ENCODE measurements at regions of chr1 and their contacts with region 1.

Region 1: GRCh38 chr1:13730751-13731482 is 30.9 kb downstream of the PRDM2 start:
- DNase-seq: peak; percentile 76
- ATAC-seq: peak; percentile 89
- H3K4me3 Mint-ChIP-seq: peak overlapping the region; percentile 82
- H3K27ac Mint-ChIP-seq: peak overlapping the region; percentile 97
- H3K4me1 Mint-ChIP-seq: peaks cover 99% of the 10 kb centered on the region
- H3K27me3 Mint-ChIP-seq: no peaks in the 10 kb centered on the region
- CTCF ChIP-seq: no peak

Region 2: DNA sequence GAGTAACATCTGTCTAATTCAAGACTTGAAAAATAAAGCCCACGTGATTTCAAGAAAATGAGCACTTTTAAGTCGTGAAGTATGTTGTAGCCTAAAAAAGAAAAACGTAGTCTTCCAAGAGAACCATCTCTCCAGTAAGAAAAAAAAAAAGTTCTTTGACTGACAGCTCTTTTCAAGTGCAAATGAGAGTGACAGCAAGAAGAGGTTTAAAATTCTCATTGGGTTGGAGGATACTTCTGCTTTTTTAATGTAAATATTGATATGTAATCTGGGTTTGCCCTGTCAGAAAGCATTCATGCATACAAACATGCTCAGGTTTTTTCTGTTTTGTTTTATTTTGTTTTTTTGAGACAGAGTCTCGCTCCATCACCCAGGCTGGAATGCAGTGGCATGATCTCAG is 63.2 kb before region 1 on chr1:
- CTCF ChIA-PET with region 1: interaction called, 107 read pairs
- POLR2A ChIA-PET with region 1: interaction called, 57 read pairs
- intact Hi-C with region 1: loop called (anchors 1 kb)
- DNase-seq: no peak
- ATAC-seq: peak; percentile 75
- H3K4me3 Mint-ChIP-seq: peak overlapping the region; percentile 78
- H3K27ac Mint-ChIP-seq: peak overlapping the region; percentile 95
- H3K4me1 Mint-ChIP-seq: peaks cover 48% of the 10 kb centered on the region
- H3K27me3 Mint-ChIP-seq: no peaks in the 10 kb centered on the region
- CTCF ChIP-seq: no peak

Region 3: DNA sequence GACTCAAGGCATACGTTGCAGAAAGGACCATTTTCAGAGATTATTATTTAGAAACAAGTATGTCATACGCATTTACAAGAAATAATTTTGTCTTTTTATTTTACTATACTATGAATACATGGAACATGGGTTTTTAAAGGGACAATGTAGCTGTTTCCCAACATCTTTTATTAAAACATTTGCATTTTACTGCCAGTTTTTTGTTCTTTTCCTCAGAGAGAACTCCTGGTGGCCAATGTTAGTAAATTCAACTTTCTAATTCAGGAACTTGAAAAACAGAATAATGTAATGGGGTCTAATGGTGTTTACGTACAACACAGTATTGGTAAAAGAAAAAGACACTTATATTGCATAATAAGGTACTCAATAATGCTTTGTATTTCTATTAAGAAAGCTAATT is 16.1 kb before region 1 on chr1:
- CTCF ChIA-PET with region 1: interaction called, 34 read pairs
- POLR2A ChIA-PET with region 1: interaction called, 43 read pairs
- intact Hi-C with region 1: no loop called
- DNase-seq: no peak
- ATAC-seq: no peak
- H3K4me3 Mint-ChIP-seq: no peak overlapping the region
- H3K27ac Mint-ChIP-seq: peak overlapping the region; percentile 65
- H3K4me1 Mint-ChIP-seq: peaks cover 78% of the 10 kb centered on the region
- H3K27me3 Mint-ChIP-seq: no peaks in the 10 kb centered on the region
- CTCF ChIP-seq: no peak

Region 4: GRCh38 chr1:13748610-13749505 is 17.9 kb after region 1 on chr1:
- CTCF ChIA-PET with region 1: interaction called, 7 read pairs
- POLR2A ChIA-PET with region 1: interaction called, 51 read pairs
- intact Hi-C with region 1: loop called (anchors 1 kb)
- DNase-seq: peak; percentile 96
- ATAC-seq: peak; percentile 88
- H3K4me3 Mint-ChIP-seq: peak overlapping the region; percentile 85
- H3K27ac Mint-ChIP-seq: peak overlapping the region; percentile 94
- H3K4me1 Mint-ChIP-seq: peaks cover 55% of the 10 kb centered on the region
- H3K27me3 Mint-ChIP-seq: no peaks in the 10 kb centered on the region
- CTCF ChIP-seq: no peak

Region 5: DNA sequence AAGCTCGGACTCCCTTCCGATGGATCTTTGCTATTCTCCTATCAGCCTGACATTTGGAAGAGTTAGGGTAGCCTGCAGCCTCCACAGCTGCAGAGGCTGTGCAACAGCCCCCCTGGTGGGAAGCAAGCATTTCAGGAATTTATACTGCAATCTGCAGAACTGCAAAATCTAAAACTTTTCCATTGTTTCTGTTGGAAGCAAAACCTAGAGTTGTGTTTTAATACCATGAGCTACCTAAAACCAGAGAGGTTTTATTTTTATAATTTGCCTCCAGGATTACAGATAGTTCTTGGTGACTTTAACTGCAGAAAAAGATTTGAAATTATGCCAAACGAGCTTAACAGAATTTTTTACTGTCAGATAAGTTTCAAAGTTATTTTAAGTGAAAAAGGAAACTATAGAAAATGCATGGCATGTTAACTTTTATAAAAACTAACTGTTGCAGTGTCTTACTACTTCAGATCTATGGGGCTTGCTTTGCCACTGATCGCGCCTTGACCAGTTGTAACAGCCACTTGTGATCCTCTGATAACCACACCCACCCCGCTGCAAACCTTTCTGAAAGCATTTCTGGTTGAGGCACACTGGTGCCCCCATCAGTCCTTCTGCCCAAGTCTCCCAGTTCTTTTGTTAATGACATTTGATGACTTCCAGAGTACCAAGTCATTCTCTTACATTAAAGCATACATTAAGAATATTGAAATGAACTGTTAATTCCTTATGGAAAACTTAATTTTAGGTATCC is 33.8 kb after region 1 on chr1:
- CTCF ChIA-PET with region 1: interaction called, 4 read pairs
- POLR2A ChIA-PET with region 1: interaction called, 4 read pairs
- intact Hi-C with region 1: loop called (anchors 5 kb)
- DNase-seq: no peak
- ATAC-seq: peak; percentile 42
- H3K4me3 Mint-ChIP-seq: no peak overlapping the region
- H3K27ac Mint-ChIP-seq: peak overlapping the region; percentile 53
- H3K4me1 Mint-ChIP-seq: peaks cover 88% of the 10 kb centered on the region
- H3K27me3 Mint-ChIP-seq: no peaks in the 10 kb centered on the region
- CTCF ChIP-seq: no peak

Region 6: GRCh38 chr1:13781907-13782644 is 51.2 kb after region 1 on chr1:
- CTCF ChIA-PET with region 1: no interaction called
- POLR2A ChIA-PET with region 1: interaction called, 10 read pairs
- intact Hi-C with region 1: no loop called
- DNase-seq: no peak
- ATAC-seq: peak; percentile 21
- H3K4me3 Mint-ChIP-seq: peak overlapping the region; percentile 41
- H3K27ac Mint-ChIP-seq: peak overlapping the region; percentile 69
- H3K4me1 Mint-ChIP-seq: peaks cover 29% of the 10 kb centered on the region
- H3K27me3 Mint-ChIP-seq: no peaks in the 10 kb centered on the region
- CTCF ChIP-seq: no peak

Region 7: DNA sequence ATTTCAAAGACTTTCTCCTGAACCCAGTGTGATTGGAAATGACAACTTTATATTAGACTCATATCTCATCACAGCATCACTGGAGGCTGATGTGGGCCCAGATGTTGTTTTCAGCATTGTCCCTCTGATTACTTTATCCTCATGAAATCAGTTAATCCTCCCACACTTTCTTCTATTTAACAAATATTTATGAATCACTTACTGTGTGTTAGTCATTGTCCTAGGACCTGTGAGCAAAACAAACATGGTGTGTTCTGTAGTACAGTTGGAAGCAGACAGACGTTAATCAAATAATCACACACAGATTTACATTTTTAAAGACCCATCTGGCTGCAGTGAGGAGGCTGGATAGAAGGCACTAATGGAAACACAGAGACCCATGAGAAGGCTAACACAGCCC is 352.8 kb after region 1 on chr1:
- CTCF ChIA-PET with region 1: no interaction called
- POLR2A ChIA-PET with region 1: no interaction called
- intact Hi-C with region 1: no loop called
- DNase-seq: no peak
- ATAC-seq: no peak
- H3K4me3 Mint-ChIP-seq: no peak overlapping the region
- H3K27ac Mint-ChIP-seq: no peak overlapping the region
- H3K4me1 Mint-ChIP-seq: no peaks in the 10 kb centered on the region
- H3K27me3 Mint-ChIP-seq: no peaks in the 10 kb centered on the region
- CTCF ChIP-seq: no peak

Region 8: GRCh38 chr1:14350197-14350596 is 619.3 kb after region 1 on chr1:
- CTCF ChIA-PET with region 1: no interaction called
- POLR2A ChIA-PET with region 1: no interaction called
- intact Hi-C with region 1: no loop called
- DNase-seq: no peak
- ATAC-seq: no peak
- H3K4me3 Mint-ChIP-seq: no peak overlapping the region
- H3K27ac Mint-ChIP-seq: no peak overlapping the region
- H3K4me1 Mint-ChIP-seq: no peaks in the 10 kb centered on the region
- H3K27me3 Mint-ChIP-seq: no peaks in the 10 kb centered on the region
- CTCF ChIP-seq: no peak

Measured in activated B cell treated with CpG ODN at 0.5 μM for 24 hours (primary cell).